ENCODE measurements at regions of chr10 and their contacts with region 1.

Region 1: DNA sequence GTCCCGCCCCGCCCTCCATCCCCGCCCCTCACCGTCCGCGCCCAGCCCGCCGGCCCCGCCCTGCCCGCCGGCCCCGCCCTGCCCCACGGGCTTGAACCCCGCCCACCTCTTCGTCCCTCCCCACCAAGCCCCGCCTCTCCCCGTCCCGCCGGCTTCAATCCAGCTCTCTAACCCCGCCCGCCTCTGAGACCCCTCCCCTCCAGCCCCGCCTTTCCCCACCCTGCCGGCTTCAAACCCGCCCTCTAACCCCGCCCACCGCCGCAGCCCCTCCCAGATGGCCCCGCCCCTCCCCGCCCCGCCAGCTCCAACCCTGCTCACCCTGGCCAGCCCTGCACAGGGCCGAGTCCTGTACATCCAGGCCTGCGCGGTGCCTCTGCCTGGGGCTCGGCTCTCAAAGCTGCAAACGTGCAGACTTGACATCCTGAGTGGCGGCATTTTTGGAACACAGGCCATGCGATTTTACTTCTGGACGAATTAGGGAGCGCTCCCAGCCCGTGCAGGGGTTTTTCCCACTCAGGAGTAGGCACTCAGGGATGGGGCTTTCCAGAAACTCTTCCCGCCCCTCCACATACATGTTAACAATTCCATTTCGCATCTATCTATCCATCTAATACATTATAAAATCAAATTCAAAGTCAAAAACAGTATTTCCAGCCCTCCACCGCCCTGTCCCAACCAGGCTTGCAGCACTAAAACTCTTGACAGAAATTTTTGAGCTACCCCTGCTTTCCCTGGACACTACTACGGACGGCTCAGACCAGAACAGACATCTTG is 475 bp upstream of the NMT2 start:
- DNase-seq: peak; percentile 99
- H3K4me3 ChIP-seq: peak overlapping the region in 2 of 4 donors; percentile 21 to 98
- H3K27ac ChIP-seq: peak overlapping the region; percentile 56 to 72 (median 68)
- H3K4me1 ChIP-seq: peaks cover 0 to 22% (median 13%) of the 10 kb centered on the region in 4 donors
- H3K27me3 ChIP-seq: no peaks in the 10 kb centered on the region
- CTCF ChIP-seq: no peak
- EP300 ChIP-seq: no peak
- POLR2A ChIP-seq: no peak

Region 2: DNA sequence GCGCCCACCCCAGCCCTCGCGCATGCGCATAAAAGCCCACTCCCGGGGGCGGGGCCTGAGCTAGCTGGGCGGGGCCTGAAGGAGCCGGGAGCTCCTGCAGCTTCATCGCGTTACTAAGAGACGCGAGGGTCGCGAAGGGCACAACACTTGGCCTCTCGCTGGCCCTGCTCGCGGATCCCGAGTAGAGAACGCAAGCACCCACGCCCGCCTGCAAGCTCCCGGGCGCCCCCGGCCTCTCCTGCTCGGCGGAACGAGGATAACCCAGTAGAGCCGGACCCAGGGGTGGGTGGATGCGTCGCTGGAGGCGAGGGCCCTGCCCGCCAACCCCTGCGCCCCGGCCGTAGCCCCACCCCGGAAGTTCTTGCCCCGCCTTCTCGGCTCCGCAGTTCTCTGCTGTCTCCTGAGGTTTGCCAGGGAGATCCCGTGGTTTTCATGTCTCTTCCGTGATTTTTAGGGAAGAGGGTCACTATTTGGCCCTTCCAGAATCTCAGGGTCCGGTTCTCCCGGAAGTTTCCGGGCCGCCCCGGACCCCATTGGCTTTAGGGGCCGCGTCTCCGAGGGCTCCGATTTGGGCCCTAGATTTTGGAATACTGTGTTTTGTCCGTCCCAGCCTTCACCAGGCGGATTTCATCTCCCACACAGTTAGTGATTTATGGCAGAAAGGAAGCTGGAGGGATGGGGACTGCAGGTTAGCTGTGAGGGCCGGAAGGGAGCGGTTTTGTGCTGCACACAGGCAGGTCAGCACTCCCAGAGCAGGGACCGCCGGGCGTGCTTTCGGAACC is 209.5 kb before region 1 on chr10 and contains the start of gene MEIG1:
- intact Hi-C with region 1: loop called (anchors 1 kb)
- DNase-seq: peak; percentile 97
- H3K4me3 ChIP-seq: peak within 1 kb of the TSS; percentile 62 to 71 (median 70)
- H3K27ac ChIP-seq: peak within 1 kb of the TSS; percentile 90 to 97 (median 95)
- H3K4me1 ChIP-seq: peaks cover 0 to 15% (median 8%) of the 10 kb centered on the region in 4 donors
- H3K27me3 ChIP-seq: no peaks in the 10 kb centered on the region
- CTCF ChIP-seq: no peak
- EP300 ChIP-seq: no peak
- POLR2A ChIP-seq: peak in 1 of 2 donors; percentile 39
- total RNA-seq, gene MEIG1: 1.3 TPM in 1 of 4 donors, not detected in the others

Region 3: DNA sequence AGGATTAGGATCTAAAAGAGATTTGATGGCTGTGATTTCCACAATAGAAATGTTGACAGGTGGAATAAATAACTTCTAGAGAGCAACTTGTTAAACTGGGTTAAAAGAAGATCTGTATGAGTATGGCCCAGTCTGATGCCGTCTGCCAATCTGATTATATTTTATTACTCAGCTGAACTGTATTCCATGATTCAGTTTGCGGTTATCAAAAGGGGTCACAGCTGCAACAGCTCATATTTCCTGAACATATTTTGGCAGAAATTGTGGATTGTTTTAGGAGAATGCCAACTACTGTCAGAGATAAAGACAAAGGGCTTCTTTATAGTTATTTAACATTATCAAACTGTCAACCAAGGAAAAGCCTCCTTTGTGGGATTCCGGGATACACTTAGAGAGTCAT is 936.1 kb after region 1 on chr10:
- intact Hi-C with region 1: no loop called
- DNase-seq: no peak
- H3K4me3 ChIP-seq: no peak overlapping the region
- H3K27ac ChIP-seq: no peak overlapping the region
- H3K4me1 ChIP-seq: no peaks in the 10 kb centered on the region
- H3K27me3 ChIP-seq: no peaks in the 10 kb centered on the region
- CTCF ChIP-seq: no peak
- EP300 ChIP-seq: no peak
- POLR2A ChIP-seq: no peak